Aorta (tissue), 5 donors: ENCODE measurements at regions of chr17 and their contacts with region 1.

Region 1: DNA sequence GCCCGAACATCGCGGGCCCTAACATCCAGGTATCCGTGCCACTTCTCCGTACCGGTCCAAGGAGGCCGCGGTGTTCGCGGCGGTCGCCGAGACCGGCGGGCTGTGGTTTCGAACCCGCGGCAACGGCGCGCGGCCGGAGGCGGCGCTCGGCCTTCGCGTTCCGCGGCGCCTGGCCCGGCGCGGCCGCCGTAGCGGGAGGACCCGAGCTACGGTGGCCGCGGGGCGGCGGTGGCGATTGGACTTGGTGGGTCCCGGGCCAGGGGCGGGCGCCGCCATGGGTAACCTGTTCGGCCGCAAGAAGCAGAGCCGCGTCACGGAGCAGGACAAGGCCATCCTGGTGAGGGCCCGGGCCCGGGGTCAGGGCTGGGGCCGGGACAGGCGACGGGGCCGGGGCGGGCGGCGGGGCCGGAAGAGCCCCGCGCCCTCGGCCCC is at the start of gene CHMP6:
- DNase-seq: peak; percentile 87 to 93
- ATAC-seq: peak; percentile 82
- H3K4me3 ChIP-seq: peak within 1 kb of the TSS; percentile 94
- H3K27ac ChIP-seq: no peak within 1 kb of the TSS
- H3K4me1 ChIP-seq: no peaks in the 10 kb centered on the region
- H3K27me3 ChIP-seq: no peaks in the 10 kb centered on the region
- total RNA-seq, gene CHMP6: 22.9 to 30.9 TPM

Region 2: DNA sequence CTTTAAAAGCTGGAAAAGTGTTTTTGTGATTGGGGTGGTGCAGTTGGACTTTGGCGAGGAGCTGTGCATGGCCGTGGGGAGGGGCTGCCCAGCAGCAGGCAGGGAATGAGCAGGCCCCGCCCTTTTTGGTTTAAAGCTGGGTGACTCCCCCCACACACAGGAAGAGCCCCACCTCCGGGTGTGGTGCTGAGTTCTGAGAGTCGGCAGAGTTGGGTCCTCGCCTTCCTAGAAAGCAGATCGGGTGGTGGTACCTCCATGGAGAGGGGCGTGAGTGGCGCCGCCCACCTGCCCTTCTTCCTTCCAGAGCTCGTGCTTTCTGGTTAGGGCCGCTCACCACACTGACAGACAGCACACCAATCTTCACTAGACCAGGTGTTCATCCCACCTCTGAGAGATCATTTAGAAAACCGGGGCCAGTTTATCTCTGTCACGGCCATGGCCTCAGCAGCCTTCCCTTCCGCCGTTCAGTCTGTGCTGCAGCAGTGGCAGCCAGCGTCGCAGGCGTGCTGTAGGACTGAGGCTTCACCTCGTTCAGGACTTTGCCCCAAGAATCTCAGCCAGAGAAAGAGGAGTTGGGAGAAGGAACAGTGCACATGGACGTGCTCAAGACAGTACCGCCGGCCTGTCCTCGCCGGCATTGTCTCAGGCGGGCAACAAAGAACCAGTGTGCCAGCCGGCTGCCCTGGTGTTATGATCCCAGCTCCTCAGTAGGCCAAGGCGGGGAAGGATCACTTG is 144.0 kb before region 1 on chr17:
- intact Hi-C with region 1: no loop called
- DNase-seq: peak in 1 of 2 donors; percentile 51
- ATAC-seq: no peak
- H3K4me3 ChIP-seq: no peak overlapping the region
- H3K27ac ChIP-seq: no peak overlapping the region
- H3K4me1 ChIP-seq: no peaks in the 10 kb centered on the region
- H3K27me3 ChIP-seq: no peaks in the 10 kb centered on the region

Region 3: DNA sequence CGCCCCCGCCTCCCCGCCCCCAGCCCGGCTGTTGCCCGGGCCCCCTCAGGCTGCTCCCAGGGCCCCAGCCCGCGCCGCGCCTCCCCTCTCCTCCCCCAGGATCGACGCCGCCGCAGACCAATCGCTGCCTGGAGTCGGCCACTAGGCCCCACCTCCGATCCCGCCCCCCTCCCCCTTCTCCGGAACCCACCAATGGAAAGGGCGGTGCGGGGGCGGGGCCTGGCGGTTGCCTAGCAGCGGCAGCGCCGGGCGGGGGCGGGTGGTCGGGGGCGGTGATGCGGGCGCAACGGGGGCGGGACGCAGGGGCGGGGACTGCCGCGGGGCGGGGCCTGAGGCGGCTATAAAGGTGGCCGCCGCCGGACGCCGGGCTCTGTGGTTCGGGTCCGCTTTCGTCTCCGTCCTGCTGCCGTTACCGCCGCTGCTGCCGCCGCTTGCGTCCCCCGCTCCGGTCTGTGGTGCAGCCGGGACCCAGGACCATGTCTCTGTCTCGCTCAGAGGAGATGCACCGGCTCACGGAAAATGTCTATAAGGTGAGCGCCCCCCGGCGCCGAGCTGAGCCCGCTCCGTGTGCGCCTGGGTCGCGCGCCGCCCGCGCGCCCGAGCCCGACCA is 43.2 kb after region 1 on chr17 and contains the start of gene BAIAP2:
- intact Hi-C with region 1: loop called in 1 of 2 experiments (anchors 5 kb)
- DNase-seq: peak; percentile 98
- ATAC-seq: peak; percentile 87
- H3K4me3 ChIP-seq: peak within 1 kb of the TSS; percentile 28 to 33
- H3K27ac ChIP-seq: no peak within 1 kb of the TSS
- H3K4me1 ChIP-seq: no peaks in the 10 kb centered on the region
- H3K27me3 ChIP-seq: peaks cover 0 to 2% of the 10 kb centered on the region in 2 donors
- total RNA-seq, gene BAIAP2: 19.2 to 23.7 TPM